Lower leg skin (tissue), 4 donors: ENCODE measurements at regions of chr7 and their contacts with region 1.

Region 1: DNA sequence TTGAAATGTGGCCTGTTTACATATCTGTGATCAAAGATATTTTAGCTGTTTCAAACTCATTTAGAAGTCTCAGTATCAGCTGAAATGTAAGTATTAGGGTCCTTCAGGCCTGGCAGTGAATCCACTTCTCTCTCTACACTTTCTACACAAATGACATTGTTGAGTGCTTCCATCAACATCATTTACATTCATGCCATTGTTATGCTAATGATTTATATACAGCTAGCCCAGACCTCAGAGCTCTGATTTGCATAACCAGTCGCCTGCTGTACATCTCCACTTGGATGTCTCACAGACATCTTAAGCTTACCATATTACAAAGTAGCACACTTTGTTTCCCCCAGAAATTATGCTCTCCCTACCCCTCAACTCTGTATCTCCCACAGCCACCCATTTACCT is 71.6 kb downstream of the GSDME start:
- DNase-seq: no peak
- H3K4me3 ChIP-seq: no peak overlapping the region
- CTCF ChIP-seq: no peak
- POLR2A ChIP-seq: no peak

Region 2: DNA sequence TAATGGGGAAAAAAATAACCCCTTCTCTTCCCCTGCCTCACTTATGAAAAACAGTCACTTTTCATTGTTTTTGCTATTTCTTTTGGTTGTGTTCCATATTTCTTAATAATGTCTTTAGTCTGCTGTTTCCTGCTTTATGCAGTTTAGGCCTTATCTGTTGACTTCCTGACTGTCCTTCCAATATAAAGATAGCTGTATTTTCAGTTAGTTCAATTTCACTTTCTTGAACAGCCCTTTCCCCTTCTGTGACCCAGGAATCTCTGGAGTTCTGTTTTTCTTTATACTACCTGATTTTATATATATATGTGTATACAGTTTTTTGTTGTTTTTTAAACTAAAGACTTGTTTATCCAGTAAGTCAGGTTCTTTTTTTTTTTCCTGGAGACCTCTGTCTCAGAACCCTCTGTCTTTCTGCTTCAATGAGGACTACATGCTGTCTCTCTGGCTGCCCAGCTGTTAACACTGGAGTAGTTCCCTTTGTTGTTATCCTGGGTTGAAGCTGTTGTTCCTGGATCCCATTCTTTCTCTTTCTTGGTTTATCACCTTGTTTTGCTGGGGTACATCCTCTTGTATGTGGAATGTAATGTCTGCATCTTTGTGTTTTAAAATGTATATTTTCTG is 15.6 kb before region 1 on chr7:
- intact Hi-C with region 1: loop called (anchors 2 kb)
- DNase-seq: no peak
- H3K4me3 ChIP-seq: no peak overlapping the region
- CTCF ChIP-seq: no peak
- POLR2A ChIP-seq: no peak

Region 3: GRCh38 chr7:25437308-25437707 is 751.6 kb after region 1 on chr7:
- intact Hi-C with region 1: no loop called
- DNase-seq: no peak
- H3K4me3 ChIP-seq: no peak overlapping the region
- CTCF ChIP-seq: no peak
- POLR2A ChIP-seq: no peak